ENCODE measurements at regions of chr10 and their contacts with region 1.

Region 1: GRCh38 chr10:97463363-97464132 is 17.6 kb downstream of the ZDHHC16 start:
- DNase-seq: peak in 1 of 3 donors; percentile 61
- ATAC-seq: peak; percentile 92 to 97 (median 92)
- H3K4me3 ChIP-seq: no peak overlapping the region
- H3K27ac ChIP-seq: no peak overlapping the region
- H3K4me1 ChIP-seq: peaks cover 0 to 5% (median 0%) of the 10 kb centered on the region in 4 donors
- H3K27me3 ChIP-seq: no peaks in the 10 kb centered on the region
- CTCF ChIP-seq: peak; percentile 84 to 89 (median 88)
- POLR2A ChIP-seq: no peak

Region 2: GRCh38 chr10:97543025-97543575 is 79.6 kb after region 1 on chr10:
- intact Hi-C with region 1: loop called in 1 of 2 experiments (anchors 10 kb)
- DNase-seq: peak in 2 of 3 donors; percentile 71 to 78
- ATAC-seq: peak; percentile 80 to 93 (median 90)
- H3K4me3 ChIP-seq: no peak overlapping the region
- H3K27ac ChIP-seq: peak overlapping the region; percentile 13 to 69 (median 40)
- H3K4me1 ChIP-seq: no peaks in the 10 kb centered on the region
- H3K27me3 ChIP-seq: no peaks in the 10 kb centered on the region
- CTCF ChIP-seq: no peak
- POLR2A ChIP-seq: no peak

Region 3: DNA sequence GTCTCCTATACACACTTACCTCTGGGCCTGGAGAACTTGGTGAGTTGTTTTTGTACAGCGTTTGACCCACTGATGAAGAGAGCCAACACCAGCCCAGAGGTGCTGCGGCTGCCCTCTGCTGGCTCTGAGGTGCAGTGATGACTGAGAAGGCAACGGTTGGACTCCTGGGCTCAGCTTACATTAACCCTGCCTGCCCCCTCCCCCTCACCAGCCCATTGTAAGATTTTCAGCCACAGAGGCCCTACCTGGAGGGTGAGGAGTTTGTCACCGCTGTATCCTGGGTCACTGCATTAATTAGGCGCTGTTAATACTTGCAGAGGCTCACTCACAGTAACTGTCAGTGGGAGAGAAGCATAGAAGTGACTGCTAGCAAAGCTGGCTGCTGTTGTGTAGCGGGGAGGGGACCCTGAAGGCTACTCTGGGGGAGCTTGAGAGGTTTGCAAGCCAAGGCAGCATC is 90.1 kb after region 1 on chr10:
- intact Hi-C with region 1: loop called (anchors 5 to 10 kb)
- DNase-seq: peak; percentile 71 to 74 (median 73)
- ATAC-seq: peak; percentile 99 to 100 (median 99)
- H3K4me3 ChIP-seq: no peak overlapping the region
- H3K27ac ChIP-seq: no peak overlapping the region
- H3K4me1 ChIP-seq: no peaks in the 10 kb centered on the region
- H3K27me3 ChIP-seq: no peaks in the 10 kb centered on the region
- CTCF ChIP-seq: peak; percentile 73 to 82 (median 78)
- POLR2A ChIP-seq: no peak

Measured in right lobe of liver (tissue), 6 donors.